GM12878 (cell line): ENCODE measurements at regions of chr20 and their contacts with region 1.

Region 1: DNA sequence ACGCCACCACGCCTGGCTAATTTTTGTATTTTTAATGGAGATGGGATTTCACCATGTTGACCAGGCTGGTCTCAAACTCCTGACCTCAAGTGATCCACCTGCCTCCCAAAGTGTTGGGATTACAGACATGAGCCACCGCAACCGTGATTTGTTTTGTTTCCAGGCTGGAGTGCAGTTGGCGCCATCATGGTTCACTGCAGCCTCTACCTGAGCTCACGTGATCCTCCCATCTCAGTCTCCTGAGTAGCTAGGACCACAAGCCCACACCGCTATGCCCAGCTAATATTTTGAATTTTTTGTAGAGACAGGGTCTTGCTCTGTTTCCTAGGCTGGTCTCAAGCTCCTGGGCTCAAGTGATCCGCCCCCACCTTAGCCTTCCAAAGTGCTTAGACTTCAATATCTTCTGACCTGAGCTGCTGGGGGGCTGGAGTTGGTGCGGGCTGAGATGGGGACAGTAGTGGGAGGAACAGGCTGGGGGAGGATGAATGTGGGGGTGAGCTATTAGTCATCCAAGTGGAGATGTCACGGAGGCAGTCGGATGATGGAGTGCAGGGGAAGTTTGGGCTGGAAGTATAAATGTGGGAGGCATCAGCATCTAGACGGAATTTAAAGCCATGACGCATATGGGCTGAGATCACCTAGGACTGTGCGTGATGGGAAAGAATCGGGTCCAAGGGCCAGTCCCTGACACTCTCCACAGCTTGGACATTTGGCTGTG is 23.1 kb upstream of the ZMYND8 start:
- DNase-seq: no peak
- ATAC-seq: no peak
- H3K4me3 ChIP-seq: no peak overlapping the region
- H3K27ac ChIP-seq: no peak overlapping the region
- H3K4me1 ChIP-seq: peaks cover 5% of the 10 kb centered on the region
- H3K27me3 ChIP-seq: no peaks in the 10 kb centered on the region
- CTCF ChIP-seq: no peak
- EP300 ChIP-seq: no peak
- POLR2A ChIP-seq: no peak
- RAD21 ChIP-seq: no peak

Region 2: GRCh38 chr20:47093320-47093966 is 286.1 kb before region 1 on chr20:
- CTCF ChIA-PET with region 1: no interaction called
- POLR2A ChIA-PET with region 1: no interaction called
- RAD21 ChIA-PET with region 1: no interaction called
- SMC1A ChIA-PET with region 1: no interaction called
- in situ Hi-C with region 1: no loop called
- intact Hi-C with region 1: no loop called
- DNase-seq: no peak
- ATAC-seq: no peak
- H3K4me3 ChIP-seq: no peak overlapping the region
- H3K27ac ChIP-seq: no peak overlapping the region
- H3K4me1 ChIP-seq: no peaks in the 10 kb centered on the region
- H3K27me3 ChIP-seq: peaks cover 0 to 2% of the 10 kb centered on the region in 2 experiments; a peak in 1 of 4 replicates
- CTCF ChIP-seq: no peak
- EP300 ChIP-seq: no peak
- POLR2A ChIP-seq: no peak
- RAD21 ChIP-seq: no peak

Region 3: DNA sequence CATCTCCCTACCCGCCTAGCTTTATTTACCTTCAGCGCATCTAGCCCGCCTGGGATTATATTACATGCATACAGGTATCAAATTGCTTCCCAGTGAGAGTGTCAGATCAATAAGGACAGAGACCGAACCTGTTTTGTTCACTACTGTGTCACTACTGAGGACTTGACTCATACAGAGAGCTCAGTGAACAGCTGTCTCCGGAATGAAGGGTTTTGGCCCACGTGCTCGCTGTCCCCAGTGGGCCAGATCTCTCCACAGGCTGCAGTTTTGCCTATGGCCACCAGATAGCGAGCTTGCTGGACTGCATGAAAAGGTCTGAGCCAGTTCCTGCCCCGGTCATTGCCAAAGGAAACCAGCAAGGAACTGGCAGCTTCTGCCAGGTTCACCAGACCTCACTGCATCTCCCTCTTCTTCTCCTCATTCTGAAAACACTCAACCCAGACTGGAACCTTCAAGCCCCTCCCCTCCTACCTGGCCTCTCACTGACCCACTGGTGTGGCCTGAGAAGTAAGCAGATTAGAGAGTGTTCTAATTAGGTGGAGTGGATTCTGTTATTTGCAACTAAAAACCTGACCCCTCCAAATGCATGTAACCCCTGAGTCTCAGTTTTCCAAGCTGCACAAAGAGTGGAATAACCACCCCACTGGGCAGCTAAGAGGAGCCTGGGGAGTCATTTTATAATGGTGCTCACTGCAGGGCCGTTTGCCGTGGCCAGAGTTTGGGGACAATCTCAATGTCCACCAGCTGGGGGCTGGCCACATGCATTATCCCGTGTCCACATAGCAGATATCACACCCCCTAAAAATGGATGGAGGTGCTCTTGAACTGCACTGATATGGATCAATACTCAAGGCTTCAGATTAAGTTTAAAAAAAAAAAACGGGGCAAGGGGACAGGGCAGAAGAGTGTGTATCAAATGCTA is 173.8 kb before region 1 on chr20:
- CTCF ChIA-PET with region 1: interaction called, 326 read pairs
- POLR2A ChIA-PET with region 1: interaction called, 3 read pairs
- RAD21 ChIA-PET with region 1: interaction called, 141 read pairs
- SMC1A ChIA-PET with region 1: interaction called, 140 read pairs
- in situ Hi-C with region 1: no loop called
- intact Hi-C with region 1: loop called (anchors 2 kb)
- DNase-seq: peak; percentile 31
- ATAC-seq: peak; percentile 91
- H3K4me3 ChIP-seq: no peak overlapping the region
- H3K27ac ChIP-seq: no peak overlapping the region
- H3K4me1 ChIP-seq: no peaks in the 10 kb centered on the region; the same call in 1 of the 2 replicates
- H3K27me3 ChIP-seq: no peaks in the 10 kb centered on the region
- CTCF ChIP-seq: peak; percentile 62 to 76 (median 64)
- EP300 ChIP-seq: no peak
- POLR2A ChIP-seq: no peak
- RAD21 ChIP-seq: peak; percentile 41; the same call in 1 of the 2 replicates

Region 4: DNA sequence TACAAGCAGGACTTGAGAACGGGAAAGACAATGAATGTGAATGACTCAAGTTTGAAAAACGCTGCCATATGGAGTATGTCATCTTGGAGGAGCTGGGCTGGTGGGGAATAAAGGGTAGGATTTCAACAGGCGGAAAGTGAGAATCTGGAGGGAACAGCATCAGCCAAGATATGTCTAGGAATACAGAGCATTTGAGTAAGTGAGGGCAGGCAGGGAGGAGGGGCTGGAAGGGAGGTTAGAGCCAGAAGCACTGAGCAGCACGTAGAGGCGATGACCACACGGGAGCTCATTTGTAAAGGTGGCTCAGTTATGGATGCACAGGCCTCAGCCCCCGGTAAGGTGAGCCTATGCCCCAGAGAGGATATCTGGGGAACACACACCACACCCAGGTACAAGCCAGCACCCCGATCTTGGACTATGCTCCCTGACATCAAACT is 138.2 kb before region 1 on chr20:
- CTCF ChIA-PET with region 1: interaction called, 4 read pairs
- POLR2A ChIA-PET with region 1: no interaction called
- RAD21 ChIA-PET with region 1: interaction called, 10 read pairs
- SMC1A ChIA-PET with region 1: interaction called, 3 read pairs
- in situ Hi-C with region 1: no loop called
- intact Hi-C with region 1: no loop called
- DNase-seq: no peak
- ATAC-seq: no peak
- H3K4me3 ChIP-seq: no peak overlapping the region
- H3K27ac ChIP-seq: no peak overlapping the region
- H3K4me1 ChIP-seq: no peaks in the 10 kb centered on the region
- H3K27me3 ChIP-seq: no peaks in the 10 kb centered on the region
- CTCF ChIP-seq: no peak
- EP300 ChIP-seq: no peak
- POLR2A ChIP-seq: no peak
- RAD21 ChIP-seq: no peak

Region 5: GRCh38 chr20:47296950-47297349 is 82.6 kb before region 1 on chr20:
- CTCF ChIA-PET with region 1: interaction called, 14 read pairs
- POLR2A ChIA-PET with region 1: no interaction called
- RAD21 ChIA-PET with region 1: interaction called, 5 read pairs
- SMC1A ChIA-PET with region 1: interaction called, 9 read pairs
- in situ Hi-C with region 1: no loop called
- intact Hi-C with region 1: no loop called
- DNase-seq: no peak
- ATAC-seq: no peak
- H3K4me3 ChIP-seq: no peak overlapping the region
- H3K27ac ChIP-seq: no peak overlapping the region
- H3K4me1 ChIP-seq: no peaks in the 10 kb centered on the region
- H3K27me3 ChIP-seq: no peaks in the 10 kb centered on the region
- CTCF ChIP-seq: peak in 1 of 3 experiments; percentile 24; a peak in 1 of 6 replicates
- EP300 ChIP-seq: no peak
- POLR2A ChIP-seq: no peak
- RAD21 ChIP-seq: peak; percentile 24; the same call in 1 of the 2 replicates

Region 6: GRCh38 chr20:47356526-47357295 is 22.9 kb before region 1 on chr20 and contains the start of gene ZMYND8:
- CTCF ChIA-PET with region 1: interaction called, 66 read pairs
- POLR2A ChIA-PET with region 1: interaction called, 11 read pairs
- RAD21 ChIA-PET with region 1: interaction called, 96 read pairs
- SMC1A ChIA-PET with region 1: interaction called, 47 read pairs
- in situ Hi-C with region 1: no loop called
- intact Hi-C with region 1: no loop called
- DNase-seq: peak; percentile 95
- ATAC-seq: peak; percentile 73
- H3K4me3 ChIP-seq: peak within 1 kb of the TSS; percentile 77
- H3K27ac ChIP-seq: peak within 1 kb of the TSS; percentile 99
- H3K4me1 ChIP-seq: peaks cover 46% of the 10 kb centered on the region
- H3K27me3 ChIP-seq: no peaks in the 10 kb centered on the region
- CTCF ChIP-seq: no peak
- EP300 ChIP-seq: no peak
- POLR2A ChIP-seq: no peak
- RAD21 ChIP-seq: no peak
- polyA plus RNA-seq, gene ZMYND8: 12.9 to 18.4 TPM

Region 7: DNA sequence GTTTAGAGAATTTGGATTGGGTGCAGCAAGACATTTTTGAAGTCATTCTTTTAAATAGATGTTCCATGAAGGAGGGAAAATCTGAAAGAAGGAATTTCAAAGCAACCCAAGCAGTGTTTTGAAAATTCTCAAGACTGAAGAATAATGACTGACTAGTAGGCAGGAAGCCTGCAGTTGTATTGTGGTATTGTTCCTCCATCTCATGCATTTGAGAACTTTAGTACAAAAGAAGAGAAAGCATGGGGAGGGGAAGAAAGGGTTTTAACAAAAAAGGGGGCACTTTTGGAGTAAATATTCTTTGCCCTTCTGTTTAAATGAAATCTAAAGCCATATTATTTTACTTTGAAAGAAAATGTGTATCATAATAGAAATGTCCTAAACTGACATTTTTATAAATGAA is 128.7 kb after region 1 on chr20:
- CTCF ChIA-PET with region 1: interaction called, 13 read pairs
- POLR2A ChIA-PET with region 1: interaction called, 5 read pairs
- RAD21 ChIA-PET with region 1: interaction called, 22 read pairs
- SMC1A ChIA-PET with region 1: interaction called, 11 read pairs
- in situ Hi-C with region 1: no loop called
- intact Hi-C with region 1: no loop called
- DNase-seq: no peak
- ATAC-seq: peak; percentile 35; the same call in 2 of the 3 replicates
- H3K4me3 ChIP-seq: peak overlapping the region; percentile 75
- H3K27ac ChIP-seq: peak overlapping the region; percentile 68
- H3K4me1 ChIP-seq: peaks cover 26% of the 10 kb centered on the region
- H3K27me3 ChIP-seq: no peaks in the 10 kb centered on the region
- CTCF ChIP-seq: no peak
- EP300 ChIP-seq: no peak
- POLR2A ChIP-seq: no peak
- RAD21 ChIP-seq: no peak